Ovary (tissue), 10 donors: ENCODE measurements at regions of chr17 and their contacts with region 1.

Region 1: DNA sequence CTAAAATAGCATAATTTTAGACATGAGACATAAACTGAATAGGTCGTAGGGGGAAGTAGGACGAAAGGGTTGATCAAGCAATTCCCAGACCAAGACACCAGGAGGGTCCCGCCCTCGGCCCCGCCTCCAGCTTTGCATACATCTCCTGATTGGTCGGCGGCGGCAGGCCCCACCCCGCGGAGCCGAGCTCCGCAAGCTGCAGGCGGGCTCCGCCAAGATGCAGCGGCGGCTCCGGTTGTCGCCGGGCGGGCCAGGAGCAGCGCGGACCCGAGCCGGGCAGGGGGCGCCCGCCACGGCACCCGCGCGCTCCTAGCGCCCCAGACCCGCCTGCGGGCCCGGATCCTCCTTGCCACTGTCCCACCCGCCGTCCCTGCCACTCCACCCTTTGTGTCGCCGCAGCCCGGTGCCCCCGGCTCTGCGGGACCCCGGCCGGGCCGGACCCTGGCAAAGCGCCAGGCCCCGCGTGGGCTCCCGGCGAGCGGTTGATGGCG is at the start of gene CDR2L:
- DNase-seq: peak; percentile 95 to 98 (median 96)
- H3K4me3 ChIP-seq: peak within 1 kb of the TSS; percentile 69
- H3K27ac ChIP-seq: peak within 1 kb of the TSS; percentile 50 to 68
- H3K4me1 ChIP-seq: peaks cover 7% of the 10 kb centered on the region
- H3K27me3 ChIP-seq: no peaks in the 10 kb centered on the region
- CTCF ChIP-seq: no peak
- EP300 ChIP-seq: no peak
- POLR2A ChIP-seq: peak; percentile 62
- total RNA-seq, gene CDR2L: 4.5 to 19.2 (median 5.8) TPM

Region 2: DNA sequence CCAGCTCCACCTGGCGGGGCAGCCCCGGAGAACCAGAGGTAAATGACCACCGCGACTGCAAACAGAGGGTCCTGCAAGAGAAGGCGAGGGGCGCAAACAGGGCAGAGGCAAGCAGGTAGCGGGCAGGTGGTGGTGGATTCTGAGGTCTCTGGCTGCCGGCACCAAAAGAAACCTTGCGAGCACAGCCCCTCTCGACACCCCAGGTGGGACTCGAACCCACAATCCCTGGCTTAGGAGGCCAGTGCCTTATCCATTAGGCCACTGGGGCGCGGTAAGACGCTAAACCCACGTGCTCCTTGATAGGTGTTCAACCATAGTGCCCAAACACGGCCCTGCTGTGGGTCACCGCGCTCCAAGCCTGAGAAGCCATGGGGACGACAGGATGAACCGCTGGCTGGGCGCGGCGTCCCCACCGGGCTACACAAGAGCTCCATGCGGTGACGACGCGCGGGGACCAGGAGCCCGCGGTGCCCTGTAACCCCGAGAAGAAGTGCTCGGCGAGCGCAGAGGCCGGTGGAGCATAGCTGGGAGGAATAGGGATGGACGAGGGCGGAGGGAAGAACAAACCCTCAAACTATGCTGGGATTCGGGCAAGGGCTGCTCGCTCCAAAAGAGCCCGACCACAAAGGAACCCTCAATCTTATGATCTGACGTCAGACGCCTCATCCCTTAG is 46.9 kb after region 1 on chr17:
- intact Hi-C with region 1: loop called in 1 of 4 experiments (anchors 10 kb)
- DNase-seq: peak; percentile 88 to 94 (median 94)
- H3K4me3 ChIP-seq: peak overlapping the region; percentile 78
- H3K27ac ChIP-seq: peak overlapping the region; percentile 89 to 91
- H3K4me1 ChIP-seq: peaks cover 2% of the 10 kb centered on the region
- H3K27me3 ChIP-seq: no peaks in the 10 kb centered on the region
- CTCF ChIP-seq: peak in 2 of 3 donors; percentile 22 to 37
- EP300 ChIP-seq: no peak
- POLR2A ChIP-seq: no peak

Region 3: DNA sequence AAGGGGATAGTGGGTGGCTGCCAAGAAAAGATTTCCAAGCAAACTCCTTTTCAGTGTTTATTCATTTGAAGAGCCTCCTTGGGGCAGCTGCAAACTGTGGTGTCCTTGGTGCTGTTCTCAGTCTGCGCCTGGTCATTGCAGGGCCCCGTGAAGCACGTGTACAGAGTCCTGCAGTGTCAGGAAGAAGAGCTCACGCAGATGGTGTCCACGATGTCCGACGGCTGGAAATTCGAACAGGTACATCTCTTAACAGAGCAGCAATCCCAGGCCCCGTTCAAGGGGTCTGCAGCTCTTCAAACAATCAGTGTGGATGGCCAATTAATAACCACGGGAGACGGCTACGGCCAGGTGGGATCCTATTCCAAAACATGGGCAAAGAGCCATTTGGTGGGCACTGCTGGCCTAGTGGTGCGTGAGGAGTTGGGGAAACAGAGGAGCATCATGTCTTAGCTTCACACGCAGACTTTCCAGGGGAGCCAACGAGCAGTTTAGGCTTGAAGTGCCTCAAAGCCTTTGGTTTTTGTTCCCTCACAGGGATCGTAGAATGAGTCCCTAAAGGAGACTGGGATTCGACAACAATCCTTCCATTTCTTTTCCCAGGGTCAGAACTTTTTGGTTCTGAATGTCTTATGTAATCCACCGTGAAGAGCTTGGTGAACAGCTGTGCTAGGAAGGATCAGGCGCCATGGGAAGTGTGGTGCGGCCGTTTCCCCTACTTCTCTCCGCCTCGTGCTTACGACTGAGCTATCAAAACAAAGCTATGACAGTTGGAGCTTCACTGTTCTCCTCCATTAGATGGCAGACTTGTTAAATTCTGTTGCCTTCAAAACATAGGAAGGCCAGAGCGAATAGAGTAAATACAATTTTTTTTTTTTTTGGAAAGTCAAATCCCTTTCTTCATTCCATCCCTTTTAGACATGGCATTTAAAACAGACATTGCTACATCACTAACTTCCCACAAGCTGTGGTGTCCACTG is 72.2 kb after region 1 on chr17:
- intact Hi-C with region 1: no loop called
- DNase-seq: peak; percentile 51 to 58 (median 56)
- H3K4me3 ChIP-seq: no peak overlapping the region
- H3K27ac ChIP-seq: peak overlapping the region in 1 of 2 donors; percentile 78
- H3K4me1 ChIP-seq: peaks cover 2% of the 10 kb centered on the region
- H3K27me3 ChIP-seq: no peaks in the 10 kb centered on the region
- CTCF ChIP-seq: peak in 2 of 3 donors; percentile 47 to 53
- EP300 ChIP-seq: no peak
- POLR2A ChIP-seq: no peak